ENCODE measurements at regions of chr10 and their contacts with region 1.

Region 1: GRCh38 chr10:128631801-128632241 is 505.6 kb upstream of the MKI67 start:
- DNase-seq: no peak
- H3K4me3 Mint-ChIP-seq: no peak overlapping the region
- H3K27ac Mint-ChIP-seq: no peak overlapping the region
- H3K4me1 Mint-ChIP-seq: peaks cover 2% of the 10 kb centered on the region
- H3K27me3 Mint-ChIP-seq: peaks cover 15% of the 10 kb centered on the region

Region 2: DNA sequence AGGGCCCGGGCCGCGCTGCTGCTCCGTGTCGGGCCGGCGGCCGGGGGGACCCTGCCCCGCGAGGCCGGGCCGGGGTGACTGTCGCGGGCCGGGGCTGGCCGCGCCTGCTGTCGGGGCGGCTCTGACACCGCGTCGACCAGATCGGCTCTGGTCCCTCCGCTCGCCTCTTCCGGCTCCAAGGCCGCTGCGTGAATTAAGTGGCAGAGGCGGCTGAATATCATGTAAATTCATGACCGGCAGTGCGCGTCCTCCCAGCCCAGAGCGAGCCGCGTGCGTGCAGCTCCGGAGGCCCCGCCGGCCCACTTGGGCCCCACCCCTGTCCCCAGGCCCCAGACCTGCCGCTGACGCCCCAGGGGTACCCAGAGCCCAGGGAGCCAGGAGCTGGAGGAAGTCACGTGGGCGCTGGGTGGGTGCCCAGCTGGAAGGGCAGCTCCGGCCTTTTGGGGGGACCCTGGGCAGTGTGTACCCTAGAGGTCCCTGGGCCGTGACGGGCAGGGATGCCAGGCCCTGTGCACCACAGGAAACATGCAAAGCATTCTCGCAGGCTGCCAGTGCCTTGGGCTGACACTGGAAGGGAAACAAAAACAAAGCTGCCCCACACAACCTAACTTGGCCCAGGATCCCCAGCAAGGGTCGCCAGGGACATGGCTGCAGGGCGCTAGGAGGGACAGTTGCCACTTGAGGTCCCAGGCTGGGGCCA is 78.4 kb after region 1 on chr10:
- CTCF ChIA-PET with region 1: no interaction called
- intact Hi-C with region 1: no loop called
- DNase-seq: no peak
- H3K4me3 Mint-ChIP-seq: no peak overlapping the region
- H3K27ac Mint-ChIP-seq: no peak overlapping the region
- H3K4me1 Mint-ChIP-seq: no peaks in the 10 kb centered on the region
- H3K27me3 Mint-ChIP-seq: peaks cover 19% of the 10 kb centered on the region

Region 3: GRCh38 chr10:128843972-128844371 is 212.2 kb after region 1 on chr10:
- CTCF ChIA-PET with region 1: no interaction called
- intact Hi-C with region 1: loop called (anchors 5 kb)
- DNase-seq: no peak
- H3K4me3 Mint-ChIP-seq: no peak overlapping the region
- H3K27ac Mint-ChIP-seq: no peak overlapping the region
- H3K4me1 Mint-ChIP-seq: no peaks in the 10 kb centered on the region
- H3K27me3 Mint-ChIP-seq: no peaks in the 10 kb centered on the region

Region 4: DNA sequence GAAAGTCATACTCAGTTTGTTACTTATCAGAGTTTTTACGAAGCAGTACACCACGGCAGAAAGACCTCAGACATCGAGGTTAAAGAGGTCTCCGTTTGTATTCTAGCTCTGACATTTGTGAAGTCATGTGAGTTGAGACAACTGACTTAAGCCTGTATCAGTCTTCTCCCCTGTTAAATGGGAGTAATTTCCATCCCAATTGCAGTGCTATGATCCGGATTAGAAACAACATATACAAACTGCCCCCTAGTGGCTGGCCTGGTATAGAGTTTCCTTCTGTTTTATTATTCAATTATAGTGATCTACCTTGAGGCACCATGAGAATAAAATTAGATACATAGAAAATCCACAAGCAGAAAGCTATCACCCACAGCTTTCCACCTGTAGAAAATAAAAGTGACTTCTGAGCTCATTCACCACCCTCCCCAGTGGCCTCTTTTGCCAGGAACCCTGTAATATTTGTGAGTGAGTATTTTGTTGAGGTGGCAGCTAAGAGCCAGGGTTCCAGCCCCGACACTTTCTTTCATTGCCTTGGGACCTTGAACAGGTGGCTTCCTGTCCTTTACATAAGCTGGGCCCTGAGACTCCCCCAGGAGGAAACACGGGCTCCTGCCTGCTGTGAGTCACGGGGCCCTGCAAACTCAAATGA is 228.0 kb after region 1 on chr10:
- CTCF ChIA-PET with region 1: no interaction called
- intact Hi-C with region 1: loop called (anchors 5 kb)
- DNase-seq: peak; percentile 64
- H3K4me3 Mint-ChIP-seq: no peak overlapping the region
- H3K27ac Mint-ChIP-seq: no peak overlapping the region
- H3K4me1 Mint-ChIP-seq: no peaks in the 10 kb centered on the region
- H3K27me3 Mint-ChIP-seq: peaks cover 2% of the 10 kb centered on the region

Measured in activated naive CD4-positive, alpha-beta T cell treated with anti-CD3 and anti-CD28 coated beads for 36 hours (primary cell).